Mammary epithelial cell (primary cell): ENCODE measurements at regions of chr1 and their contacts with region 1.

Region 1: DNA sequence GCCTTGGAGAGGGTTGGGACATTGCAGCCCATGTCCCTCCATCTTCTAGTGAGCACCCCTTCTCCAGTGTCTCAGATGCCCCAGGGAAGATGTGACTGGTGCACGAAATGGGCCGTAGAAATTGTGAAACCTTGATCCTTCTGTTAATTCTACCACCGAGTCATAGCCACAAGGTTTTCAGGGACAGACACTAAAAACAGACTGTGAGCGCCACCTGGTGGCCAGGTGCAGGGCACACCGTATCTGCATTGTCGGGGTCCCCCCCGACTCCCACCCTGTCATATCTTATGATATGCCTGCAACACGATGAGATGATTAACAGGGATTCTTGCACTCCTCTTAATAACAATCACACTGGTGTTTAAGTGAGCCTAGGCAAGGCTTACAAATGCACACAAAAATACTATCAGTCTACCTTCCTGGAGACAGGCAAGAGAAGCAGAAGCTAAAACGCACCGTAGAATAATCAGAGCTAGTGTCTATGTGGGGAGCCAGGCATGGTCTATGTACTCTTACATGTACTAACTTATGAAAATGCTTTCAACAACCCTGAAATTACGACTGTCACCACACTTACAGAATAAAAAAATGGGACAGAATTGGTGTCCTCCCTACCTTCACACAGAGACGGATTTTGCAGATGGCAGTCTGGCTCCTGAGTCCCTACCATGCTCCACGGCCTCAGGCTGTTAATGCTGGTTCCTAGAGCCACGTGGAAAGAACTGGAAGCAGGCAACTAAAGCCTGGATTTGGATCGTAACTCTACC is 57.9 kb downstream of the FHAD1 start:
- DNase-seq: peak; percentile 52
- H3K4me3 ChIP-seq: no peak overlapping the region
- H3K27ac ChIP-seq: no peak overlapping the region
- H3K4me1 ChIP-seq: peaks cover 7% of the 10 kb centered on the region
- H3K27me3 ChIP-seq: no peaks in the 10 kb centered on the region
- CTCF ChIP-seq: peak; percentile 85 to 91

Region 2: DNA sequence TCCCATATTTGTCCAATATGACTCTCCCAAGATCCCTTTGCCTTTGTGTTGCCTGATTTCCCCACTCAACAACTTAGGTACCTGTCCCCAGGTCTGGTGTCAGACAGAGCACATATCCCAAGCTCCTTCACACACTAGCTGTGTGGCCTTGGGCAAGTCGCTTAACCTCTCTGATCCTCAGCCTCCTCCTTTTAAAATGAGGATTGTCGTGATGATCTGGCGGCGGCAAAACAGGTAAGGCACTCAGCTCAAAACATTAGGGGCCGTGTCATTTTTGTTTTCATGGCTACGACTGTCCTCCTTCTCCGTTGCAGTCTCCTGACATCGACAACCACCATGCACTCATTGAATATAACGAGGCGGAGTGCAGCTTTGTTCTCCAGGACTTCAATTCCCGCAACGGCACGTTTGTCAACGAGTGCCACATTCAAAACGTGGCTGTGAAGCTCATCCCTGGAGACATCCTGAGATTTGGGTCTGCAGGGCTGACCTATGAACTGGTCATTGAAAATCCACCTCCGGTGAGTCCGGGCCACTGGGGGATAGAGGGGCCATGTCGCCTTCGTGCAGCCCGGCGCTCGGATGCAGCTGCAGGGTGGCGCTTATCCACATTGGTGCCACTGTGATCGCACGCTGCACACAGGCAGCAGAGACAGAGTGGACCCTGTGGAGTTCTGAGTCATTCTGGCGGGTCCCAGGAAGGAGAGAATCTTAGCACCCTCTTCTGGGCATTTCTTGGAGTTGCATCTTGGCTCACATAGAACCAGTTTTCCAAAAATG is 32.7 kb before region 1 on chr1:
- CTCF ChIA-PET with region 1: no interaction called
- dilution Hi-C with region 1: no loop called
- in situ Hi-C with region 1: no loop called
- intact Hi-C with region 1: loop called (anchors 1 kb)
- DNase-seq: peak; percentile 70
- H3K4me3 ChIP-seq: no peak overlapping the region
- H3K27ac ChIP-seq: no peak overlapping the region
- H3K4me1 ChIP-seq: peaks cover 4% of the 10 kb centered on the region
- H3K27me3 ChIP-seq: no peaks in the 10 kb centered on the region
- CTCF ChIP-seq: peak; percentile 62 to 85